ENCODE measurements at regions of chr7 and their contacts with region 1.

Region 1: GRCh38 chr7:129188372-129188891 is at the start of gene SMO:
- DNase-seq: peak; percentile 90
- ATAC-seq: peak; percentile 85
- H3K4me3 Mint-ChIP-seq: peak within 1 kb of the TSS; percentile 96
- H3K27ac Mint-ChIP-seq: peak within 1 kb of the TSS; percentile 53; the same call in 1 of the 2 replicates
- H3K4me1 Mint-ChIP-seq: peaks cover 41% of the 10 kb centered on the region
- H3K27me3 Mint-ChIP-seq: peaks cover 30% of the 10 kb centered on the region
- CTCF ChIP-seq: no peak
- total RNA-seq, gene SMO: 56.9 to 61.4 TPM (median 60.3 TPM) in 3 replicates

Region 2: DNA sequence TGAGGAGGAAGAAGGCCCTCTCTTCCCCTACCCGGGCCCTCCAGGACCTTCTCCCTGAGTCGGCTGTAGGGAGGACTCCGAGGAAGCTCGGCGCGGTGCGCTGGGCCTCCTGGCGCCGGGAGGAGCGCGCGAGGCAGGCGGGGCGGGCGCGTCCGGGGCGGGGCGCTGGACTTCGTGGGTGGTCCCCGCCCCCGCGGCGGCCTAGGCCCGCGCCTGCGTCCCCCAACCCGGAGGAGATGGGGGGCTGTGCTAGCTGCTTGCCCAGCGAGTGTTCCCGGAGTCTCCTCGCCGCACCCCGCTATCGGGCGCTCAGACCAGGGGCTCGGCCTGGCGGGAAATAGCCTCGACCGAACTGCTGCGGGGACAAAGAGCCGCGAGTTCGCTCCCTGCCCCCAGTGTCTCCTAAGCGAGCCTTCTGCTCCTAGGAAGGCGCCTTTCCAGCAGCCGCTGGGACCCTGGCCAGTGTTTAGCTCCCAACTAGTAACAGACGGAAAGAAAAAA is 19.2 kb before region 1 on chr7:
- CTCF ChIA-PET with region 1: interaction called, 36 read pairs
- POLR2A ChIA-PET with region 1: interaction called, 27 read pairs
- DNase-seq: peak; percentile 69
- ATAC-seq: peak; percentile 69
- H3K4me3 Mint-ChIP-seq: peak overlapping the region; percentile 77
- H3K27ac Mint-ChIP-seq: peak overlapping the region; percentile 89
- H3K4me1 Mint-ChIP-seq: peaks cover 39% of the 10 kb centered on the region
- H3K27me3 Mint-ChIP-seq: no peaks in the 10 kb centered on the region; the same call in none of the 2 replicates
- CTCF ChIP-seq: no peak

Region 3: DNA sequence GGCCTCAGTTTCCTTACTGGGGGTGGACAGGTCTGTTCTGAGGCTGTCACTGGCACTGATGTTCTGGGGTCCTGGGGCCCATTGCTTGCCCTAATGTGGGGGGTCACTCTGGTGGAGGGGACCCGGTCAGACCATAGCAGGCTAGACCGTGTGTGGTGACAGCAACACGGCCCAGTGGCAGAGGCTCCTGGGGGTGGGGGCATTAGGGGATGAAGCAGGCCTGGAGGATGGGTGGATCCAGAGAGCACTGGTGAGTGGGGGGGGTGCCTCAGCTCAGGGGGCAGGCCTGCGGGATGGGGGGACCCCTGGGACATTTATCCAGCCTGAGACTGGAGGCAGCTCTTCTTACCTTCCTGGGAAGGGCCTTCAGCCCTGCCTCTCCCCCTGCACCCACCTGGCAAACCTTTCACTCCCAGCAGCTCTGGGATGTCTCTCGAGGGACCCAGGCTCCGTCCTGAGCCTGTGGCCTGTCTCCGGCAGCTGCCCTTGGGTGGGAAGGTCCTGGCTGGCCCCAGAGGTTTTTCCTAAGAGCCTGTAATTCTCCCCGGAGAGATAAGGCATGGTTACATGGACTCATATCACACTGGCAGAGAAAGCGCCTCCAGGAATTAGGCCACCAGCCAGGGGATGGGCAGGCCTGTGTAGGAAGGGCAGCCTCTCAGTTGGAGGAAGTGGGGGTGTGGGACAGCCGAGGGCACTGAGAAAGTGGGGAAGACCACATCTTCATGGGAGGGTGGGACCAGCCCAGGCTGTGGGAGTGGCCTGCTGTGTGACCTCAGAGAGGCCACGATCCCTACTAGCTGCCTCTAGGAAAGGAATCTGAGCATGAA is 616.7 kb after region 1 on chr7:
- CTCF ChIA-PET with region 1: no interaction called
- POLR2A ChIA-PET with region 1: no interaction called
- DNase-seq: no peak
- ATAC-seq: peak; percentile 20; the same call in 1 of the 2 replicates
- H3K4me3 Mint-ChIP-seq: no peak overlapping the region
- H3K27ac Mint-ChIP-seq: no peak overlapping the region
- H3K4me1 Mint-ChIP-seq: peaks cover 38% of the 10 kb centered on the region
- H3K27me3 Mint-ChIP-seq: peaks cover 2% of the 10 kb centered on the region; the same call in 1 of the 2 replicates
- CTCF ChIP-seq: no peak

Measured in WTC11 (cell line).